AG04450 (cell line): ENCODE measurements at regions of chr9 and their contacts with region 1.

Region 1: GRCh38 chr9:35882263-35882848 is 12.2 kb upstream of the OR13J1 start:
- DNase-seq: peak; percentile 39
- H3K4me3 ChIP-seq: no peak overlapping the region
- H3K27ac ChIP-seq: no peak overlapping the region
- H3K27me3 ChIP-seq: peaks cover 4% of the 10 kb centered on the region
- CTCF ChIP-seq: peak; percentile 99

Region 2: DNA sequence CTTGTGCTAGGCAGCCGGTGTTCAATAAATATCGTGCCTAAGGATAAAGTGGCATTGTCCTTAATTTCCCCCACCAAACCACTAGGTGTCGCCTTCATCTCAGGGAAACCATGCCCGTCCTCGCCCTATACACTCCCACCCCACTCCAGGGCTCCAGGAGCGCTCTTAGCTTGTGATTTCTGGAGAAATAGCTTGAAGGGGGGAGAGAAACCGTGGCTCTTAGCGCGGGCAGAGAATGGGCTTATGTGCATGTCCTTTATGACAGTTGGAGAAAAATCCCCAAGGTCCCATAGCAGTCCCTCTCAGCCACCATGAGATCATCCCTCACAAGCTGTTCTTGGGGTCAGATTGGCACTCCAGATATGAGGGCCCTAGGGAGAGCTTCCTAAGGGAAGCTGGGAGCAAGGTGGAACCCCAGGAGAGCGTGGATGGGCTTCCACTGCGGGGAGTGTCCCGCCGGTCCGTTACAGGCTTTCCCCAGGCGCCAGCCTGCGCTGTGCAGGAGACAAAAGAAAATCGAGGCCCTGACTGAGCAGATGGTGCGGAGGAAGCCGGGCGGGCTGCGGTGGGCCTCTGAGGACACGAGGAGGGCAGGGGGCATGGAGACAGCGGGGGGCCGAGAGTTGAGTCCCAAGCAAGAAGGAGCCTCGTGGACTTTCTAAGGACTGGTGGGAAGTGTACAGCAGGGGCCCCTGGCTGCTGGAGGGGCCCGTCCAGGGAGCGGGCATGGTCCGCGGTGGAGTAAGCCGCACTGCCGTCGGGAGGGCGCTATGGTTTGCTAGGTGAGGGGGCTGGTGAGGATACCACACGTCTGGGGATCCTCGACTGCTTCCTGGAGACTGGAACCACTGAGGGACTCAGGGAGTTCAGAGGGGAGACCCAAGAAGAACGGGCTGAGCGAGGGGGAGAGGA is 91.7 kb before region 1 on chr9:
- CTCF ChIA-PET with region 1: interaction called, 108 read pairs
- POLR2A ChIA-PET with region 1: interaction called, 3 read pairs
- DNase-seq: peak; percentile 65
- H3K4me3 ChIP-seq: no peak overlapping the region
- H3K27ac ChIP-seq: peak overlapping the region; percentile 31
- H3K27me3 ChIP-seq: peaks cover 3% of the 10 kb centered on the region
- CTCF ChIP-seq: peak; percentile 91

Region 3: DNA sequence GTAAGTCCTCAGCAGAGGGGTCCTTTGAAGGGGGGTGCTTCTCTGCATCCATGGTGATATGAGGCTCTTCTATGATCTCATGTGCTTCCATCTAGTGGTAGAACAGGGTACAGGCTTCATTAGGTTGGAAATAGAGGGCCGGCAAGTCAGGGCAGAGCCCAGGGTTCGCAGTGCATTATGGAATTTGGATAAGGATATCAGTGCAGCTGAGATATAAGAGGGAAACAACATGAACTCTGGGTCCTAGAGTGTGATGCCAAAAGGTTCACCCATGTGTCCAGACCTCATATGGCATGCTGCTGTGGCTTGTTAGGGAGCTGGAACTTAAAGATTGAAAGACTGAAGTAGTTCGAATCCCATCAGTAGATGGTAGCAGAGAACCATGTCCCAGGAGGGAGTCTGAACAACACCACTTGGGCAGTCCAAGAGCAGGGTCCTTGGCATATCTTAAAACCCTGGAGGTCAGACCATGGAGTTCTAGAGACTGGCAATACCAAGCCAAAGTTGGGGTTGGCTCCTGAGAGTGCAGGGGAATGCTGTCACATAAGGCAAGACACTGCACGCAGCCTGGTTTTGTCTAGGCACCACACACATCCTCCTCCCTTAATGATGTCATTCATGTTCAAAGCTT is 56.2 kb before region 1 on chr9:
- CTCF ChIA-PET with region 1: interaction called, 72 read pairs
- POLR2A ChIA-PET with region 1: no interaction called
- DNase-seq: no peak
- H3K4me3 ChIP-seq: no peak overlapping the region
- H3K27ac ChIP-seq: no peak overlapping the region
- H3K27me3 ChIP-seq: peaks cover 2% of the 10 kb centered on the region
- CTCF ChIP-seq: peak; percentile 85

Region 4: DNA sequence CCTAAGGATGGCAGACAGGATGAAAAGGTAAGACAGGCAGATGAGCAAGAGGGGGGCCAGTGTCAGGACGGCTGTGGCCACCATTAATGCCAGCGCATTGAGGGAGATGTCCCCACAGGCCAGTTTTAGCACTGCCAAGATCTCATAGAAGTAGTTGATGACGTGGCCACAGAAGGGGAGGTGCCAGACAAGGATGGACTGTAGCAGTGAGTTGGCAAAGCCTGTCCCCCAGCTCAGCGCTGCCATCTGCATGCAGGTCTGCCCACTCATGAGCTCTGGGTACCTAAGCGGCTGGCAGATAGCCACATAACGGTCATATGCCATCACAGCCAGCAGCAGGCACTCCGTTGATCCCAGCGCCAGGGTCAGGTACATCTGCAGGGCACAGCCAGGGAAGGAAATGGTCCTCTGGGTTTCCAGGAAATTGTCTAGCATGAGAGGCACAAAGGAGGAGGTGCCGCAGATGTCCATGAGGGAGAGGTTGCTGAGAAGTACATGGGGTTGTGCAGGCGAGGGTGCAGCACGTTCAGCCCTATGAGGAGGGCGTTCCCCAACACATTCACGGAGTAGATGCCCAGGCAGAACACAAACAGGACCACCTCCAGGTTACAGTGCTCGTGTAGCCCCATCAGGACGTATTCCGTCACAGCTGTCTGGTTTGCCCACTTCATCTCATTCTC is 22.9 kb before region 1 on chr9:
- CTCF ChIA-PET with region 1: interaction called, 14 read pairs
- POLR2A ChIA-PET with region 1: no interaction called
- DNase-seq: no peak
- H3K4me3 ChIP-seq: no peak overlapping the region
- H3K27ac ChIP-seq: no peak overlapping the region
- H3K27me3 ChIP-seq: peaks cover 22% of the 10 kb centered on the region
- CTCF ChIP-seq: no peak

Region 5: GRCh38 chr9:35903049-35903448 is 20.7 kb after region 1 on chr9:
- CTCF ChIA-PET with region 1: interaction called, 13 read pairs
- POLR2A ChIA-PET with region 1: no interaction called
- DNase-seq: no peak
- H3K4me3 ChIP-seq: no peak overlapping the region
- H3K27ac ChIP-seq: no peak overlapping the region
- H3K27me3 ChIP-seq: peaks cover 10% of the 10 kb centered on the region
- CTCF ChIP-seq: peak; percentile 54